ENCODE measurements at regions of chr2 and their contacts with region 1.

Region 1: DNA sequence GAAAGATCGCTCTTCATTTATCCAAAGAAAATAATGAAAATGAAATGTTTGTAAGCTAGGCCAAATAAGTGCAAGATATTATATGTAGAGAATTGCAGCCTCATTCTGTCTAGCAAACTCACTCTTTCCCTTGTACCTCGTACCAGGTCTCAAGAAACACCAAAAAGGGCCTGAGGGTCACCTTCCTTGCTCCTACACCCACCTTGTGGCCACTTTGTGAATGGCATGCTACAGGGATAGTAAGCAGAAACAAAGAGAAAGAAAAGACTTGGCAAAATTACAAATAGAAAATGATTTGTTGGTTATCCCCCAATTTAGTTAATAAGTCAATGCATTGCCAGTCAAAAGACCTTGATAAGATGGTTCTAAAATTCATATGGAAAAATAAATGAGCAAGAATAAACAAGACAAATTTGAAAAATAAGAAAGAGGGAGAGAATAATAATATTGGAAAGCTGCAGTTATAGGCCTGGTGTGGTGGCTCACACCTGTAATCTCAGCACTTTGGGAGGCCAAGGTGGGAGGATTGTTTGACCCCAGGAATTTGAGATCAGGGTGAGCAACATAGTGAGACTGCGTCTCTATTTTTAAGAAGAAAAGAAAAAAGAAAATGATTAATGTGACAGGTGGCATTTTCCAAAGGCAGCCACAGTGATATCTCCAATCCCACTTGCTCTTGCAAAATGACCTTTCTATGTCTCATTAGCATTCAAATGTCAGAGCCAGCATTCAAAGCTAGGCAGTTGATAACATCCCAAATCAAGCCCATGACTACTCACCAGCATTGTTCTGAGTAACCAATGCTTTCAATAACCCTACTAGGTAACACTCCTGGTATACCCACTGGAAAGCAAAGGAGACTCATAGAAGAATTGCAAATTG is 38.8 kb upstream of the BMP10 start:
- DNase-seq: peak; percentile 39 to 74 (median 54)
- H3K4me3 ChIP-seq: no peak overlapping the region
- H3K4me3 Mint-ChIP-seq: peak overlapping the region in 3 of 7 donors; percentile 28 to 42 (median 30)
- H3K27ac ChIP-seq: no peak overlapping the region
- H3K27ac Mint-ChIP-seq: peak overlapping the region; percentile 43 to 90 (median 82)
- H3K4me1 ChIP-seq: peaks cover 58% of the 10 kb centered on the region
- H3K4me1 Mint-ChIP-seq: peaks cover 34 to 39% (median 36%) of the 10 kb centered on the region in 3 donors
- H3K27me3 ChIP-seq: no peaks in the 10 kb centered on the region
- H3K27me3 Mint-ChIP-seq: no peaks in the 10 kb centered on the region

Region 2: DNA sequence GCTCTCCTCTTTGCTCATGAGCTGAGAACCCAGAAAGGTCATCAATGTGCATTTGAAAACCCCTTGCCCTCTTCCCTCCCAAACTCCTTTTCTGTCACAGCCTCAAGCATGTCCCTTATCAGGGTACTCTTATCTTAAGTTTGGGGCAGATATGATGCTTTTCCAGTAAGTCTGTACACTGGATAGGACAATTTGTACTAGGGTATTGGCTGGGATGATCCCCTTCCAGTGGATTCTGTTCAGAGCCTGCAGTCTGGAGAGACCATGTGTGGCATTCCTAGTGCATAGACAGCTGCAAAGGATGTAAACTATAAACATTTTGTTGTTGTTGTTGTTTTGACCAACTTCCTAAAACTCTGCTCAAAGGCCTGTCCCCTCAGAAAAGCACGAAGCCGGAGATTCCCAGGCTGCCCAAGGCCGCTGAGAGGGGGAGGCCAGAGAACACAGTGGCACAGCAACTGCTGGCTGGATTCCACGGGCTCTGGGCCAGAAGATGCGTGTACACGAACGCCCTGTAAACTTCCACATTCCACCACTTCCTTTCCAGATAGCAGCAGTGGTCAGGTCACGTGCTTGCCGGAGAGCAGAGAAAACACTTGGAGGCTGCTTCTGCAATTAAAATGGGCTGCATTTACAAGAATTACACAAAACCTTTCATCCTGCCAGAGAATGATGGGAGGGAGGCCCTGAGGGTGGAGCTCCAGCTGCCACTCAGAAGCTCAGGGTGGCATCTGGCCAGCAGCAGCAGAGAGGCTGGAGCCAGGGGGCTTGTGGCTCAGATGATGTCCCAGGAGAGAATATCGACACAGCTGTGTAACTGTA is 80.9 kb before region 1 on chr2:
- CTCF ChIA-PET with region 1: interaction called, 10 read pairs
- POLR2A ChIA-PET with region 1: interaction called, 9 read pairs
- DNase-seq: peak; percentile 56 to 85 (median 70)
- H3K4me3 ChIP-seq: peak overlapping the region; percentile 18
- H3K4me3 Mint-ChIP-seq: peak overlapping the region; percentile 4 to 78 (median 71)
- H3K27ac ChIP-seq: peak overlapping the region; percentile 35
- H3K27ac Mint-ChIP-seq: peak overlapping the region; percentile 68 to 97 (median 84)
- H3K4me1 ChIP-seq: peaks cover 52% of the 10 kb centered on the region
- H3K4me1 Mint-ChIP-seq: peaks cover 59 to 86% (median 83%) of the 10 kb centered on the region in 3 donors
- H3K27me3 ChIP-seq: no peaks in the 10 kb centered on the region
- H3K27me3 Mint-ChIP-seq: peaks cover 0 to 2% of the 10 kb centered on the region in 2 donors

Region 3: DNA sequence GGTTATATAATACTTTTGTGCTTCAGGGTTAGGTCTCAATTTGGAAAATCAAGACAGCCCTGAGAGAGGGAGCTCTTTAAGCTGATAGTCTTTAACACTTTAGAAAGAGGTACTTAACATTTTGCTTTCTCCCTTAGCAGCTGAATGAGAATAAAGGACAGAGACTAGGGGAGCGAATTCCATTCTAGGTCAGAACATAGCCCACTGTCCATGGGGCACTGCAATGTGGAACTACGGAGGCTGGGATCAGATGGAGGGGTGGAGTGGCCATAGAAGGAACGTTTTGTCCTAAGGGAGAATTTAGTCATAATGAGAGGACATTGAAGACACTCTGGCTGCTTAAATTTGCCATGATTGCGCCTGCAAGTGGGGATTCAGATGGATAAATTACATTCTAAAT is 41.9 kb after region 1 on chr2:
- CTCF ChIA-PET with region 1: no interaction called
- POLR2A ChIA-PET with region 1: no interaction called
- DNase-seq: no peak
- H3K4me3 ChIP-seq: no peak overlapping the region
- H3K4me3 Mint-ChIP-seq: no peak overlapping the region
- H3K27ac ChIP-seq: no peak overlapping the region
- H3K27ac Mint-ChIP-seq: no peak overlapping the region
- H3K4me1 ChIP-seq: no peaks in the 10 kb centered on the region
- H3K4me1 Mint-ChIP-seq: no peaks in the 10 kb centered on the region
- H3K27me3 ChIP-seq: peaks cover 5% of the 10 kb centered on the region
- H3K27me3 Mint-ChIP-seq: peaks cover 16 to 38% of the 10 kb centered on the region in 2 donors

Measured in CD8-positive, alpha-beta memory T cell (primary cell).